B cell (primary cell): ENCODE measurements at regions of chr2 and their contacts with region 1.

Region 1: GRCh38 chr2:39436592-39437510 is at the start of gene MAP4K3:
- DNase-seq: peak; percentile 85
- ATAC-seq: peak; percentile 78
- H3K4me3 ChIP-seq: peak within 1 kb of the TSS; percentile 71 to 85 (median 80)
- H3K4me3 Mint-ChIP-seq: peak within 1 kb of the TSS; percentile 88
- H3K27ac ChIP-seq: peak within 1 kb of the TSS; percentile 3 to 78
- H3K27ac Mint-ChIP-seq: peak within 1 kb of the TSS; percentile 87
- H3K4me1 ChIP-seq: peaks cover 17% of the 10 kb centered on the region in 2 donors
- H3K4me1 Mint-ChIP-seq: peaks cover 29% of the 10 kb centered on the region
- H3K27me3 ChIP-seq: no peaks in the 10 kb centered on the region
- H3K27me3 Mint-ChIP-seq: no peaks in the 10 kb centered on the region
- CTCF ChIP-seq: no peak
- total RNA-seq, gene MAP4K3: 28.3 and 31.3 TPM in 2 replicates

Region 2: GRCh38 chr2:39523308-39524044 is 86.6 kb after region 1 on chr2:
- CTCF ChIA-PET with region 1: no interaction called
- POLR2A ChIA-PET with region 1: no interaction called
- intact Hi-C with region 1: loop called (anchors 5 kb)
- DNase-seq: no peak
- ATAC-seq: no peak
- H3K4me3 ChIP-seq: no peak overlapping the region
- H3K4me3 Mint-ChIP-seq: no peak overlapping the region
- H3K27ac ChIP-seq: no peak overlapping the region
- H3K27ac Mint-ChIP-seq: no peak overlapping the region
- H3K4me1 ChIP-seq: peaks cover 29 to 30% of the 10 kb centered on the region in 2 donors
- H3K4me1 Mint-ChIP-seq: peaks cover 37% of the 10 kb centered on the region
- H3K27me3 ChIP-seq: peaks cover 0 to 2% (median 0%) of the 10 kb centered on the region in 4 experiments
- H3K27me3 Mint-ChIP-seq: no peaks in the 10 kb centered on the region
- CTCF ChIP-seq: no peak